Ascending aorta (tissue), 2 donors: ENCODE measurements at regions of chrX and their contacts with region 1.

Region 1: DNA sequence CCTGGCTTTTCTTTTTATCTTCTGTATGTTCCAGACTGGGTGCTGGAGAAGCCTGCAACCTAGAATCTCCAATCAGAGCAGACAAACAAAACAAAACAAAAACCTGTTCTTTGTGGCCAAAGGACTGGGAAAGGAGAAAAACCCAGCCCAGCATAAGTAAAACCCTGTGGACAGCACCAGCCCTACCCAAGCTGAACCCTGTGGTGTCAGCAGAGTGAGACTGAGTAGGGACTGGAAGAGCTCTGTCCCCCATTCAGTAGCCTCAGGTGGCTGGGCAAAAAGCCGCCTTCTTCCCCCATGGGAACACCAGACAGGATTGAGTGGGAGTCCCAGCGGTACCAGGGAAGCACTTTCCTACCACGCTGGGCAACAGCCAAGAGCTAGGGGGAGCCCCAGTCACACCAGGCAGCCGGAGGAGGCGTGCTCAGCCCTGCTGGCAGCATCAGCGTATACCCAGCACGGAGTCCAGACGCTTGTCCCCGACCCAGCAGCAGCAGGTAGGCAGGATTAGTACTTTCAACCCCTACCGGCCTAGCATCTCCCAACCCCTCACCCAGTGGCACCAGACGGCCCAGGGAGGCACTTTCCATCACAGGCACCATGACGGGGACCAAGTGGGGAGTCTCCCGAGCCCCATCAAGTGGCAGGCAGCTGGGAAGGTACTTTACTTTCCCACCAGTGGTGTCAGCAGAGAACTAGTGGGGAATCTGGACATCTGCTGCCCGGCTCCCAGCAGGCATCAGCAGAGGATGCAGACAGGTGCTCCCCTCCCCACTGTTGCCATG is 8.6 kb upstream of the JADE3 start:
- DNase-seq: peak; percentile 16 to 84
- H3K4me3 ChIP-seq: peak overlapping the region; percentile 41 to 62
- H3K27ac ChIP-seq: no peak overlapping the region
- H3K4me1 ChIP-seq: peaks cover 0 to 2% of the 10 kb centered on the region in 2 donors
- H3K27me3 ChIP-seq: no peaks in the 10 kb centered on the region
- CTCF ChIP-seq: peak; percentile 53 to 70 (median 60)

Region 2: DNA sequence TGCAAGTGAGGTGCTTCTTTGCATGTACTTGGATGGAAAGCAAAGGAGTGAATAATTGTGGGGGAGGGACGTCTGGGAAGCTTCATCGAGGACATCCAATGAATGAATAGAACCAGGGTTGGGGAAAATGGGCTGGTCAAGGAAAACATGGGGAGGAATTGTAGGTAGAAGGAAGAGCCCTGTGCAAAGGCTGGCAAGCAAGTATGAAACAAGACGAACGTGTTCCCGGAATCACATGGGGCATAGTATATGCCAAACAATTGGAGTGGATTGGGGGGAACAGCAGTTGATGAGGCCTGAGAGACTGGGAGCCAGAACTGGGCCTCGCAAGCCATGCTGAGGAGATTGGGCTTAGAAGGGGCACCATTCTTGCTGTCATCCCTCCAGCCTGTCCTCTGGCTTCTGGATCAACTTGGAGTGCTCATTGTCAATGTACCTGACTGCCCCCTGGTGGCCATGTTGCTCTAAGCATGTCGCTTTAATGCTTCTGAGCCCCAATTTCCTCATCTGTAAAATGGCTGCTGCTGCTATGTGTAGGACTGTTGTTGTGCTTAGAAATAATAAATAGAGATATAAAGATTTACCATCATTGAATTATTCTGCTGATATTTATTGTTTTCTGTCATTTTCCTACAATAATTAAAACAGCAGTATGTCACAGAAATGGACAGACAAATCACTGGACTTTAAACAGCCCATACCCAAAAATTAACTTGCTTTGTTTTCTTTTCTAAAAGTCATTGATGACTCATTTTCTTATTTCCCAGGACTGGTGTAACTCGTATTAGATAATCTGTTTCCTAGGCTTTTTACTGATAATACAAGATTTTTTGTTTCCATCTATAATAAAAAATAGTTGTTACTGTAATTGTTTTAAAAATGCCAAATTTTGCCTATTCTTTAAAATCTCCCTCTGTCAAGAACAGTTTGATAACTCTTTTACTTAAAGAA is 75.0 kb after region 1 on chrX:
- intact Hi-C with region 1: loop called (anchors 1 kb)
- DNase-seq: peak in 1 of 2 donors; percentile 77
- H3K4me3 ChIP-seq: no peak overlapping the region
- H3K27ac ChIP-seq: peak overlapping the region in 1 of 2 donors; percentile 51
- H3K4me1 ChIP-seq: no peaks in the 10 kb centered on the region
- H3K27me3 ChIP-seq: no peaks in the 10 kb centered on the region
- CTCF ChIP-seq: peak; percentile 13 to 52 (median 42)

Region 3: GRCh38 chrX:47030339-47030738 is 126.7 kb after region 1 on chrX:
- intact Hi-C with region 1: loop called (anchors 5 kb)
- DNase-seq: no peak
- H3K4me3 ChIP-seq: no peak overlapping the region
- H3K27ac ChIP-seq: no peak overlapping the region
- H3K4me1 ChIP-seq: no peaks in the 10 kb centered on the region
- H3K27me3 ChIP-seq: no peaks in the 10 kb centered on the region
- CTCF ChIP-seq: peak; percentile 11 to 60 (median 49)

Region 4: DNA sequence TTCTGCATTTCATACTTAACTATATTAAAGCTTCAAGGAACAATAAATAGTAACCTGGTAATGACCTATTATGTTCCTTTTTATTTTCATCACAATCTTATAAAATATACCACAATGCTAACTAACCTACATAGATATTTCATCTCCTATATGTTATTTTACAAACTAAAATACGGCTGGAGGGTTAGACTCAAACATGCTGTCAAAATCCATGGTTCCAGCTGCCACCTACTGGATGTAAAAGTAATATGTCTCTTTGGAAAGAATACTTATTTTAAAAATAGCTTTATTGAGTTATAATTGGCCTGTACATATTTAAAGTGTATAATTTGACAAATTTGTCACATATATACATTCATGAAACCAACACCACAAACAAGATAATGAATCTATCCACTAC is 189.6 kb after region 1 on chrX:
- intact Hi-C with region 1: loop called (anchors 5 kb)
- DNase-seq: no peak
- H3K4me3 ChIP-seq: no peak overlapping the region
- H3K27ac ChIP-seq: no peak overlapping the region
- H3K4me1 ChIP-seq: no peaks in the 10 kb centered on the region
- H3K27me3 ChIP-seq: no peaks in the 10 kb centered on the region
- CTCF ChIP-seq: peak; percentile 4 to 37 (median 31)